Activated B cell treated with CpG ODN at 0.5 μM for 24 hours (primary cell): ENCODE measurements at regions of chr11 and their contacts with region 1.

Region 1: GRCh38 chr11:130269326-130269943 is 45.3 kb downstream of the ZBTB44 start:
- DNase-seq: no peak
- ATAC-seq: peak; percentile 90
- H3K4me3 Mint-ChIP-seq: no peak overlapping the region
- H3K27ac Mint-ChIP-seq: peak overlapping the region; percentile 50
- H3K4me1 Mint-ChIP-seq: peaks cover 30% of the 10 kb centered on the region
- H3K27me3 Mint-ChIP-seq: no peaks in the 10 kb centered on the region
- CTCF ChIP-seq: no peak

Region 2: GRCh38 chr11:129992161-129992944 is 277.1 kb before region 1 on chr11:
- CTCF ChIA-PET with region 1: no interaction called
- POLR2A ChIA-PET with region 1: no interaction called
- intact Hi-C with region 1: no loop called
- DNase-seq: no peak
- ATAC-seq: peak; percentile 71
- H3K4me3 Mint-ChIP-seq: no peak overlapping the region
- H3K27ac Mint-ChIP-seq: no peak overlapping the region
- H3K4me1 Mint-ChIP-seq: peaks cover 7% of the 10 kb centered on the region
- H3K27me3 Mint-ChIP-seq: no peaks in the 10 kb centered on the region
- CTCF ChIP-seq: no peak

Region 3: DNA sequence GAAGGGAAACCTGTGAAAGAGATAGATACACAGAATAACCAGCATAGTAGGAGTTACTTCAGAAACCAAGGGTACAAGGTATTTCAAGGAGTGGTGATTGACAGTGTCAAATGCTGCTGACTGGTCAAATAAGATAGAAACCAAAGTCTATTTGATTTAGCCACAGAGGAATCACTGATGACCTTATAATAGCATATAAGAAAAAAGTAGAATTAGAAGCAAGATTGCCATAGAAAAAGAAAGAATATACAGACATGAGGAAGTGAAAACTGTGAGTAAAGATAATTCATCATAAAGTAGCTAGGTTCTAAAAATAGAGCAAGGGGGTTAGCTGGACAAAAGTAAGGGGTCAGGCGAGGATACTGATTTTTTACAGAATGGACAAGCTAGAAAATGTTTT is 31.1 kb after region 1 on chr11:
- CTCF ChIA-PET with region 1: no interaction called
- POLR2A ChIA-PET with region 1: no interaction called
- intact Hi-C with region 1: loop called (anchors 2 kb)
- DNase-seq: no peak
- ATAC-seq: no peak
- H3K4me3 Mint-ChIP-seq: peak overlapping the region; percentile 5
- H3K27ac Mint-ChIP-seq: peak overlapping the region; percentile 73
- H3K4me1 Mint-ChIP-seq: peaks cover 40% of the 10 kb centered on the region
- H3K27me3 Mint-ChIP-seq: no peaks in the 10 kb centered on the region
- CTCF ChIP-seq: no peak